CD4-positive, alpha-beta T cell (primary cell): ENCODE measurements at regions of chr17 and their contacts with region 1.

Region 1: GRCh38 chr17:56592487-56593085 is 913 bp upstream of the NOG start:
- DNase-seq: peak; percentile 38 to 86 (median 62)
- ATAC-seq: peak; percentile 51
- H3K4me3 ChIP-seq: peak overlapping the region; percentile 65
- H3K4me3 Mint-ChIP-seq: peak overlapping the region; percentile 83
- H3K27ac ChIP-seq: peak overlapping the region in 1 of 2 donors; percentile 44
- H3K27ac Mint-ChIP-seq: peak overlapping the region; percentile 83
- H3K4me1 ChIP-seq: peaks cover 34% of the 10 kb centered on the region
- H3K4me1 Mint-ChIP-seq: peaks cover 18% of the 10 kb centered on the region
- H3K27me3 ChIP-seq: peaks cover 12 to 29% of the 10 kb centered on the region in 2 experiments
- H3K27me3 Mint-ChIP-seq: peaks cover 37% of the 10 kb centered on the region
- CTCF ChIP-seq: peak; percentile 77

Region 2: GRCh38 chr17:55873017-55873758 is 719.4 kb before region 1 on chr17:
- CTCF ChIA-PET with region 1: no interaction called
- POLR2A ChIA-PET with region 1: no interaction called
- intact Hi-C with region 1: no loop called
- DNase-seq: no peak
- ATAC-seq: no peak
- H3K4me3 ChIP-seq: no peak overlapping the region
- H3K4me3 Mint-ChIP-seq: no peak overlapping the region
- H3K27ac ChIP-seq: no peak overlapping the region
- H3K27ac Mint-ChIP-seq: no peak overlapping the region
- H3K4me1 ChIP-seq: no peaks in the 10 kb centered on the region
- H3K4me1 Mint-ChIP-seq: no peaks in the 10 kb centered on the region
- H3K27me3 ChIP-seq: no peaks in the 10 kb centered on the region
- H3K27me3 Mint-ChIP-seq: peaks cover 11% of the 10 kb centered on the region
- CTCF ChIP-seq: no peak

Region 3: DNA sequence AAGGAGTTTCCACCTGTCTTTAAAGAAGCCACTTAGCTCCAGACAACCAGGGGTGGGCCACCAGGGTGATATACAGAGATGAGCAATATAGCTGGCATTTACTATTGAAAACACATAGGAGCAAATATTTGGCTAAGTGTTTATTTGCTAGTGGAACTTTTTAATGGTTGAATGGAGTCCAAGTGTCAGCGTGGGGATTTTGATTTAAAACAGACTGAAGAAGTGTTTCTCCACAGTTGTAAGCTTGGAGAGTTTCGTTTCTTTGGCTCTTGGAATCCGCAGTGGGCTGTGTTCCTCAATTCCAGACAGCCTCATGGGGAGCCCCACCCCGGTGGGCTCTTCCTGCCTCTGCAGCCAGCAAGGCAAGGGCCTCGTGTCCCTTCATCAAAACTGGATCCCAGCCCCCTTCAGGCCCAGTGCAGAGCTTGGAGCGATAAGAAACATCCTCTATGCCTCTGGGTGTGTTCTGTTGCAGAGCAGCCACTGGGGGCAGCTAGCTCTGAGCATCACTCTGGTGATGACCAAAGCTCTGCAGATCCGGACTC is 37.0 kb after region 1 on chr17:
- CTCF ChIA-PET with region 1: interaction called, 4 read pairs
- POLR2A ChIA-PET with region 1: interaction called, 16 read pairs
- intact Hi-C with region 1: loop called in 1 of 2 experiments (anchors 2 kb)
- DNase-seq: peak in 6 of 14 experiments; percentile 3 to 49 (median 26)
- ATAC-seq: peak; percentile 86
- H3K4me3 ChIP-seq: no peak overlapping the region
- H3K4me3 Mint-ChIP-seq: no peak overlapping the region
- H3K27ac ChIP-seq: no peak overlapping the region
- H3K27ac Mint-ChIP-seq: no peak overlapping the region
- H3K4me1 ChIP-seq: no peaks in the 10 kb centered on the region
- H3K4me1 Mint-ChIP-seq: peaks cover 9% of the 10 kb centered on the region
- H3K27me3 ChIP-seq: no peaks in the 10 kb centered on the region
- H3K27me3 Mint-ChIP-seq: peaks cover 4% of the 10 kb centered on the region
- CTCF ChIP-seq: peak; percentile 47

Region 4: GRCh38 chr17:56653877-56654276 is 61.3 kb after region 1 on chr17:
- CTCF ChIA-PET with region 1: interaction called, 19 read pairs
- POLR2A ChIA-PET with region 1: interaction called, 55 read pairs
- intact Hi-C with region 1: loop called (anchors 1 kb)
- DNase-seq: peak; percentile 45 to 86 (median 54)
- ATAC-seq: peak; percentile 100
- H3K4me3 ChIP-seq: no peak overlapping the region
- H3K4me3 Mint-ChIP-seq: no peak overlapping the region
- H3K27ac ChIP-seq: peak overlapping the region in 1 of 2 donors; percentile 31
- H3K27ac Mint-ChIP-seq: peak overlapping the region; percentile 10
- H3K4me1 ChIP-seq: peaks cover 5% of the 10 kb centered on the region
- H3K4me1 Mint-ChIP-seq: peaks cover 7% of the 10 kb centered on the region
- H3K27me3 ChIP-seq: no peaks in the 10 kb centered on the region
- H3K27me3 Mint-ChIP-seq: no peaks in the 10 kb centered on the region
- CTCF ChIP-seq: peak; percentile 62

Region 5: GRCh38 chr17:56715613-56716357 is 123.2 kb after region 1 on chr17:
- CTCF ChIA-PET with region 1: interaction called, 27 read pairs
- POLR2A ChIA-PET with region 1: interaction called, 22 read pairs
- intact Hi-C with region 1: loop called (anchors 1 kb)
- DNase-seq: peak; percentile 60 to 87 (median 66)
- ATAC-seq: peak; percentile 93
- H3K4me3 ChIP-seq: no peak overlapping the region
- H3K4me3 Mint-ChIP-seq: no peak overlapping the region
- H3K27ac ChIP-seq: no peak overlapping the region
- H3K27ac Mint-ChIP-seq: no peak overlapping the region
- H3K4me1 ChIP-seq: peaks cover 8% of the 10 kb centered on the region
- H3K4me1 Mint-ChIP-seq: peaks cover 8% of the 10 kb centered on the region
- H3K27me3 ChIP-seq: no peaks in the 10 kb centered on the region
- H3K27me3 Mint-ChIP-seq: no peaks in the 10 kb centered on the region
- CTCF ChIP-seq: peak; percentile 80

Region 6: DNA sequence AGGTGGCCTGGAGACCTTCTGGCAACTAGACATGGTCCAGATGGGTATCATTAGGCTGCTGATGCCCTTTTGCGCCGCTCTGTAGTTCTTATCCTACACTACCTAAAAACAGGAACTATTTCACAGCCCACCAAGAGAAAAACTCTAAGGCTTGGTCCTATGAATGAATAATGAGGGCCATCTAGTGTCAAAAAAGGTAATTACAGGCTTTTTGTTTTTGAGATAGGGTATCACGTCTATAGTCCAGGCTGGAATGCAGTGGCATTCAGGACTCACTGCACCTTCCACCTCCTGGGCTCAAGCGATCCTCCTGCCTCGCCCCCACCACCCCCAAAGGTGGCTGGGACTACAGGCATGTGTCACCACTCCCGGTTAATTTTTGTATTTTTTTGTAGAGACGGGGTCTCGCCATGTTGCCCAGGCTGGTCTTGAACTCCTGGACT is 347.3 kb after region 1 on chr17:
- CTCF ChIA-PET with region 1: no interaction called
- POLR2A ChIA-PET with region 1: no interaction called
- intact Hi-C with region 1: loop called in 1 of 2 experiments (anchors 5 kb)
- DNase-seq: peak in 3 of 14 experiments; percentile 63 to 74 (median 73)
- ATAC-seq: peak; percentile 79
- H3K4me3 ChIP-seq: no peak overlapping the region
- H3K4me3 Mint-ChIP-seq: no peak overlapping the region
- H3K27ac ChIP-seq: no peak overlapping the region
- H3K27ac Mint-ChIP-seq: no peak overlapping the region
- H3K4me1 ChIP-seq: no peaks in the 10 kb centered on the region
- H3K4me1 Mint-ChIP-seq: no peaks in the 10 kb centered on the region
- H3K27me3 ChIP-seq: no peaks in the 10 kb centered on the region
- H3K27me3 Mint-ChIP-seq: no peaks in the 10 kb centered on the region
- CTCF ChIP-seq: peak; percentile 85

Region 7: DNA sequence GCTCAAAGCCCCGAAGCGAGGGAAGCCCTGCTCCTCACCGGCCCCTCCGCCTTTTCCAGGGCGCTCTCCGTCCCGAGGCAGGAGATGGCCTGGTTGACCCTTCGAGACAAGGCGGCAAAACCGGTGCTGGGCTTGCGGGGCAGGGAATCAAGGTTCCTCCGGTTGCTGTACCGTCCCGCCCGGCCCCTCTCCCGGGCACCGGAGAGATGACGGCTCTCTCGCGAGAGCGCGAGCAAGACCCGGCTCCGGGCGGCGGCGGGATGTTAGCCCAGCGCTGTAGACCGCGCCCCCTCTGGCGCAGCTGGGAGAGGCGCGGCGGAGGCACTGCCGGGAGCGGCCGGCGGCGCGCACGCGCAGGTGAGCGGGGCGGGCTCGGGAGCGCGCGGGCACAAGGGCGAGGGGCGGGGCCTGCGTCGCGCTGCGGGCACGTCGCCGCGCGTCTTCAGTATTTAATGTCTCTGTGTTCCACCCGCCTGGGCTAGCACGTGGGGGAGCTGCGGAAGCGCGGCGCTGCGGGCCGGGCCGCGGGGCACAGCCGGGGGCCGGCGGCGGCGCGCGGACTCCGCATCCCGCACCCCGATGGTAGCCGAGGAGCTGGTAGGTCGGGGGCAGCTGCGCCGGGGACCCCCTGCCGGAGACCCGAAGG is 492.3 kb after region 1 on chr17 and contains the start of gene AKAP1:
- CTCF ChIA-PET with region 1: no interaction called
- POLR2A ChIA-PET with region 1: no interaction called
- intact Hi-C with region 1: loop called in 1 of 2 experiments (anchors 10 kb)
- DNase-seq: peak; percentile 87 to 99 (median 94)
- ATAC-seq: peak; percentile 88
- H3K4me3 ChIP-seq: peak within 1 kb of the TSS; percentile 89
- H3K4me3 Mint-ChIP-seq: peak within 1 kb of the TSS; percentile 95
- H3K27ac ChIP-seq: peak within 1 kb of the TSS; percentile 84 to 85
- H3K27ac Mint-ChIP-seq: peak within 1 kb of the TSS; percentile 89
- H3K4me1 ChIP-seq: peaks cover 20% of the 10 kb centered on the region
- H3K4me1 Mint-ChIP-seq: peaks cover 36% of the 10 kb centered on the region
- H3K27me3 ChIP-seq: no peaks in the 10 kb centered on the region
- H3K27me3 Mint-ChIP-seq: no peaks in the 10 kb centered on the region
- CTCF ChIP-seq: no peak
- total RNA-seq, gene AKAP1: 20.3 to 23.1 TPM